PC-9 (cell line): ENCODE measurements at regions of chr11 and their contacts with region 1.

Region 1: DNA sequence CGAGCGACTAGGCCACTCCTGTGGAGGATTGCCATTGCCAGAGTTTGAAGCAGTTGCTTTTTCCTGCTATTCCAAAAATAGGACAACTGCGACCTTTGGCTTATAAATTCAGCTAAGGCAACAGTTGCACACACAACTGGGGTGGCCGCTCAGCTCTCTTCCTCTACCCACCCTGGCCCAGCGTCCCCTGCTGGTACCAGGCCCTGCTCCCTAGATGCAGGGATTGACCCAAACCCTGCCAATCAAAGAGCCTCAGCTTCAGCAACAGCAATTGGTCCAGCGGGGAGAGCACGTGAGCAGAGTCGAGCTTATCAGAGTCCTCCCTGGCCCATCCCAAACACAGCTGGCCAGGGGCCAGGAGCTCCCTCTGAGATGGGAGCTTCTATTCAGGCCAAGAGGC is 22.0 kb upstream of the CABP2 start:
- DNase-seq: no peak
- H3K4me3 ChIP-seq: no peak overlapping the region
- H3K27ac ChIP-seq: no peak overlapping the region
- H3K4me1 ChIP-seq: 0 out of 2 replicates have a peak, but pooled peaks cover 7% of the 10 kb centered on the region
- H3K27me3 ChIP-seq: no peaks in the 10 kb centered on the region
- CTCF ChIP-seq: no peak

Region 2: DNA sequence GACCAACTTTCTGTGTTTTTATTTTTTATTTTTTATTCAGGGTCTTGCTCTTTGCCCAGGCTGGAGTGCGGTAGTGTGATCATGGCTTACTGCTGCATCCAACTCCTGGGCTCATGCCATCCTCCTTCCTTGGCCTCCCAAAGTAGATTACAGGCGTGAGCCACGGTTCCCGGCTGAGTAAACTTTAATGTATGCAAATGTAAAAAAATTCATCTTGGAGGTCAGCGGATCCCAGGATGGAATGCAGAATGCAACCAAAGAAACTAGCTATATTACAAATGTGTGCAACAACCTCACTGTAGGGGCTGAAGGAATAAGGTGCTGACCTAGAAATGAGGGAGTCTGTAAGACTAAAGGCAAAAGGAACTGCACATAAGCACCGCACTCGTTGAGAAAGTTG is 31.2 kb before region 1 on chr11:
- CTCF ChIA-PET with region 1: no interaction called
- POLR2A ChIA-PET with region 1: interaction called, 10 read pairs
- intact Hi-C with region 1: no loop called
- DNase-seq: no peak
- H3K4me3 ChIP-seq: no peak overlapping the region
- H3K27ac ChIP-seq: no peak overlapping the region
- H3K4me1 ChIP-seq: peaks cover 1% of the 10 kb centered on the region; the same call in 1 of the 2 replicates
- H3K27me3 ChIP-seq: peaks cover 16% of the 10 kb centered on the region; the same call in 1 of the 2 replicates
- CTCF ChIP-seq: no peak